ENCODE measurements at regions of chr10 and their contacts with region 1.

Region 1: GRCh38 chr10:71766702-71767419 is 6.5 kb downstream of the VSIR start:
- DNase-seq: peak; percentile 95
- ATAC-seq: peak; percentile 87
- H3K4me3 ChIP-seq: no peak overlapping the region
- H3K27ac ChIP-seq: peak overlapping the region; percentile 83
- H3K4me1 ChIP-seq: peaks cover 58% of the 10 kb centered on the region
- H3K27me3 ChIP-seq: no peaks in the 10 kb centered on the region
- CTCF ChIP-seq: no peak
- POLR2A ChIP-seq: no peak
- RAD21 ChIP-seq: no peak

Region 2: GRCh38 chr10:71713135-71714030 is 53.5 kb before region 1 on chr10:
- CTCF ChIA-PET with region 1: no interaction called
- POLR2A ChIA-PET with region 1: no interaction called
- dilution Hi-C with region 1: no loop called
- in situ Hi-C with region 1: no loop called
- intact Hi-C with region 1: loop called (anchors 5 kb)
- DNase-seq: peak; percentile 80
- ATAC-seq: peak; percentile 95
- H3K4me3 ChIP-seq: no peak overlapping the region
- H3K27ac ChIP-seq: peak overlapping the region; percentile 75
- H3K4me1 ChIP-seq: peaks cover 25% of the 10 kb centered on the region
- H3K27me3 ChIP-seq: peaks cover 3% of the 10 kb centered on the region; the same call in 1 of the 2 replicates
- CTCF ChIP-seq: peak; percentile 28; the same call in 1 of the 2 replicates
- POLR2A ChIP-seq: no peak
- RAD21 ChIP-seq: 0 out of 2 replicates have a peak, but pooled peaks have one; percentile 16

Region 3: GRCh38 chr10:71727738-71728737 is 38.8 kb before region 1 on chr10:
- CTCF ChIA-PET with region 1: no interaction called
- POLR2A ChIA-PET with region 1: no interaction called
- dilution Hi-C with region 1: no loop called
- in situ Hi-C with region 1: no loop called
- intact Hi-C with region 1: loop called (anchors 2 kb)
- DNase-seq: no peak
- ATAC-seq: peak; percentile 50
- H3K4me3 ChIP-seq: no peak overlapping the region
- H3K27ac ChIP-seq: peak overlapping the region; percentile 54; the same call in 1 of the 2 replicates
- H3K4me1 ChIP-seq: peaks cover 9% of the 10 kb centered on the region; the same call in 1 of the 2 replicates
- H3K27me3 ChIP-seq: peaks cover 8% of the 10 kb centered on the region
- CTCF ChIP-seq: no peak
- POLR2A ChIP-seq: no peak
- RAD21 ChIP-seq: no peak

Region 4: GRCh38 chr10:71857934-71858890 is 91.4 kb after region 1 on chr10:
- CTCF ChIA-PET with region 1: no interaction called
- POLR2A ChIA-PET with region 1: no interaction called
- dilution Hi-C with region 1: no loop called
- in situ Hi-C with region 1: no loop called
- intact Hi-C with region 1: no loop called
- DNase-seq: no peak
- ATAC-seq: no peak
- H3K4me3 ChIP-seq: no peak overlapping the region
- H3K27ac ChIP-seq: no peak overlapping the region
- H3K4me1 ChIP-seq: peaks cover 14% of the 10 kb centered on the region
- H3K27me3 ChIP-seq: no peaks in the 10 kb centered on the region
- CTCF ChIP-seq: no peak
- POLR2A ChIP-seq: no peak
- RAD21 ChIP-seq: no peak